SK-N-SH (cell line): ENCODE measurements at regions of chr1 and their contacts with region 1.

Region 1: DNA sequence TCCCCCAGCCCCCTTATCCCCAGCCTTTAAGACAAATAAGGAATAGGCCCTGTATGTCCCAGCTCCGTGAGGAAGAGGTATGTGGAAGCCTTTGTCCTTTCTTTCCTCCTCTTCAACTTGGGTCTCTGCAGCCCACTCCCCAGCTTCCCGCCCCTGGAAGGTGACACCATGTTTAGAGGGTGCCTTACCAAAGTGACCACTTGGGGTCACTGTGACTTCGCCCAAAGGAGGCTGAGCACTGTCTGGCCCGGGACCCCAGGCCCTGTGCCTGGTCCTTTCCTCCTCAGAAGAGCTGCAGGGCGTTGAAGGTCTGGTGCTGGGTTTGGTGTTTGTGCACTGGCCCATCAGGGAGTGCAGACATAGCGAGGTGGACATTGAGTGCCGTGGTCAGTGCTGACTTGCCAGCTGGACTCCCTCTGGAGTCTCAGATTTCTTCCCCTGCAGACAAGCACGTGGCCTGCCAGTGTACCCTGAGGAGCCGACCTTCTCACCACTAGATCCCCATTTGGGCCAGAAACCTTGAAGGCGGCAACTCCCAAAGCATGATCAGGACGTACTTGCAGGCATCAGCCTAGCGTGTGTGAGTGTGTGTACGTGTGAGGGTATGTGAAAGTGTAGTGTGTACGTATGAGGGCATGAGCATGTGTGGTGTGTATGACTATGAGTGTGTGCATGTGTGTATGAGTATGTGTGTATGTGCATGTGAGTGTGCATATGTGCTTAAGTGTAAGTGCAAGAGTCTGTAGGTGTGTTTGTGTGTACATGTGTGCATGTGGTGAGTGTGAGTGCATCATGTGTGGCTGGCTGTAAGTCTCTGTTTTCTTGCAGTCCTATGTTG is 181.4 kb upstream of the KIAA0040 start:
- DNase-seq: peak; percentile 77
- H3K4me3 ChIP-seq: peak overlapping the region in 1 of 2 experiments; percentile 29; a peak in 1 of 4 replicates
- H3K27ac ChIP-seq: no peak overlapping the region; a peak in 1 of 4 replicates
- H3K4me1 ChIP-seq: peaks cover 0 to 30% of the 10 kb centered on the region in 2 experiments; a peak in 2 of 4 replicates
- H3K27me3 ChIP-seq: no peaks in the 10 kb centered on the region
- CTCF ChIP-seq: peak; percentile 42
- EP300 ChIP-seq: no peak
- RAD21 ChIP-seq: peak; percentile 90

Region 2: GRCh38 chr1:175154629-175155472 is 219.2 kb before region 1 on chr1:
- CTCF ChIA-PET with region 1: interaction called, 20 read pairs
- POLR2A ChIA-PET with region 1: no interaction called
- DNase-seq: peak; percentile 62
- H3K4me3 ChIP-seq: no peak overlapping the region; a peak in 1 of 4 replicates
- H3K27ac ChIP-seq: no peak overlapping the region
- H3K4me1 ChIP-seq: no peaks in the 10 kb centered on the region
- H3K27me3 ChIP-seq: 0 out of 2 replicates have a peak, but pooled peaks cover 10% of the 10 kb centered on the region
- CTCF ChIP-seq: peak; percentile 86
- EP300 ChIP-seq: no peak
- RAD21 ChIP-seq: peak; percentile 87

Region 3: GRCh38 chr1:175390081-175390481 is 16.1 kb after region 1 on chr1:
- CTCF ChIA-PET with region 1: interaction called, 10 read pairs
- POLR2A ChIA-PET with region 1: no interaction called
- DNase-seq: no peak
- H3K4me3 ChIP-seq: no peak overlapping the region
- H3K27ac ChIP-seq: no peak overlapping the region
- H3K4me1 ChIP-seq: no peaks in the 10 kb centered on the region; a peak in 2 of 4 replicates
- H3K27me3 ChIP-seq: no peaks in the 10 kb centered on the region
- CTCF ChIP-seq: no peak
- EP300 ChIP-seq: no peak
- RAD21 ChIP-seq: no peak

Region 4: GRCh38 chr1:175572932-175573862 is 199.2 kb after region 1 on chr1:
- CTCF ChIA-PET with region 1: interaction called, 16 read pairs
- POLR2A ChIA-PET with region 1: no interaction called
- DNase-seq: peak; percentile 81
- H3K4me3 ChIP-seq: no peak overlapping the region
- H3K27ac ChIP-seq: peak overlapping the region in 1 of 2 experiments; percentile 90; a peak in 2 of 4 replicates
- H3K4me1 ChIP-seq: peaks cover 0 to 24% of the 10 kb centered on the region in 2 experiments; a peak in 2 of 4 replicates
- H3K27me3 ChIP-seq: no peaks in the 10 kb centered on the region
- CTCF ChIP-seq: no peak
- EP300 ChIP-seq: peak in 1 of 2 experiments; percentile 97; a peak in 2 of 4 replicates
- RAD21 ChIP-seq: peak; percentile 42

Region 5: GRCh38 chr1:175887981-175888433 is 514.0 kb after region 1 on chr1:
- CTCF ChIA-PET with region 1: interaction called, 91 read pairs
- POLR2A ChIA-PET with region 1: no interaction called
- DNase-seq: peak; percentile 85
- H3K4me3 ChIP-seq: peak overlapping the region in 1 of 2 experiments; percentile 35; a peak in 1 of 4 replicates
- H3K27ac ChIP-seq: no peak overlapping the region
- H3K4me1 ChIP-seq: peaks cover 0 to 8% of the 10 kb centered on the region in 2 experiments; a peak in 1 of 4 replicates
- H3K27me3 ChIP-seq: no peaks in the 10 kb centered on the region
- CTCF ChIP-seq: peak; percentile 65
- EP300 ChIP-seq: no peak
- RAD21 ChIP-seq: peak; percentile 86

Region 6: GRCh38 chr1:176073524-176074157 is 699.6 kb after region 1 on chr1:
- CTCF ChIA-PET with region 1: interaction called, 37 read pairs
- POLR2A ChIA-PET with region 1: no interaction called
- DNase-seq: peak; percentile 57
- H3K4me3 ChIP-seq: no peak overlapping the region; a peak in 1 of 4 replicates
- H3K27ac ChIP-seq: no peak overlapping the region
- H3K4me1 ChIP-seq: no peaks in the 10 kb centered on the region; a peak in 1 of 4 replicates
- H3K27me3 ChIP-seq: no peaks in the 10 kb centered on the region
- CTCF ChIP-seq: peak; percentile 84
- EP300 ChIP-seq: no peak
- RAD21 ChIP-seq: peak; percentile 98